ENCODE measurements at regions of chr11 and their contacts with region 1.

Region 1: DNA sequence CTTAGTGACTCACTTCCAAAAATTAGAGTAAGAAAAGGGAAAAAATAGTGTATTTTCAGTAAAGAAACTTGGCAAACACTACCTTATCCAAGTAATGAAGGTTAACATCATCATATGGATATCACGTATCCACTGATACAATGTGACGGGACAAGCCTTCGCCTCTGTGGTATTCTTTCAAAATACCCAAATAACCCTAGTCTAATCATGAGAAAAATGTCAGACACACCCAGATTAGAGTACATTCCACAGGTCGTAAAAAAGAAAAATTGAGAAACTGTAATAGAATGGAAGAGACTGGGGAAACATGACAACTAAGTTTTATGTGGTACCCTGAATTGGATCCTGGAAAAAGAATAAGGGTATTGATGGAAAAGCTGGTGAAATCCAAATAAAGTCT is 49.0 kb downstream of the NARS2 start:
- DNase-seq: no peak

Region 2: DNA sequence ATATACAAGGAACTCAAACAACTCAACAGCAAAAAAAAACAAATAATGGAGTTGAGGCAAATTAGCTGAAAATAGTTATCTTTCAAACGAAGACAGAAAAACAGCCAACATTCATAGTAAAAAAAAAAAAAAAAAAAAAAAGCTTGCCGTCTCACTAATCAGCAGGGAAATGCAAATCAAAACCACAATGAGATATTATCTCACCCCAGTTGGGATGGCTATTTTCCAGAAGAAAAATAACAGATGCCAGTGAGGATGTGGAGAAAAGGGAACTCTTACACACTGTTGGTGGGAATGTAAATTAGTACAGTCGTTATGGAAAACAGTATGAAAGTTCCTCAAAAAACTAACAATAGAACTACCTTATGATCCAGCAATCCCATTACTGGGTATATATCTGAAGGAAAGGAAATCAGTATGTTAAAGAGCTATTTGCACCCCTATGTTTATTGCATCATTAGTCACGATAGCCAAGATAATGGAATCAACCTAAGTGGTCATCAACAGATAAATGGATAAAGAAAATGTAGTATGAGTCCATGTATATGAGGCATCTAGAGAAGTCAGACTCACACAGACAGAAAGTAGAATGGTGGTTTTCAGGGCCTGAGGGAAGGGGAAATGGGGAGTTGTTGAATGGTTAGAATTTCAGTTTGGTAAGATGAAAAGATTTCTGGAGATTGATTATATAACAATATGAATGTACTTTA is 281.0 kb before region 1 on chr11:
- intact Hi-C with region 1: no loop called
- DNase-seq: no peak

Region 3: GRCh38 chr11:78453140-78453935 is 72.4 kb before region 1 on chr11:
- intact Hi-C with region 1: no loop called
- DNase-seq: no peak

Region 4: GRCh38 chr11:78504708-78505107 is 21.0 kb before region 1 on chr11:
- intact Hi-C with region 1: no loop called
- DNase-seq: no peak

Region 5: DNA sequence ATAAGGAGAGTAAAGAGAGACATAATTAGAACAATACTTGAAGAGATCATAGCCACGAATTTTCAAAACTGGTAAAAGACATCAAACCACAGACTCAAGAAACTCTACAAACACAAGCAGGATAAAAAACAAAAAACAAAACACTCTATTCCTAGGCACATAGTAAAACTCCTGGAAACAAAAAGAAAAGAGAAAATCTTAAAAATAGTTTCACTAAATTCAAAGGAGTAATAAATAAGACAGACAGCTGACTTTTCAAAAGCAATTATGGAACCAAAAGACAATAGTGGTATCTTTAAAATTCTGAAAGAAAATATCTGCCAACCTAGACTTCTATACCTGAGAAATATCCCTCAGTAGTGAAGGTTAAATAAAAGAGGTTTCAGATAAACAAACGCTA is 58.2 kb after region 1 on chr11:
- intact Hi-C with region 1: loop called in 1 of 2 experiments (anchors 2 kb)
- DNase-seq: no peak

Region 6: DNA sequence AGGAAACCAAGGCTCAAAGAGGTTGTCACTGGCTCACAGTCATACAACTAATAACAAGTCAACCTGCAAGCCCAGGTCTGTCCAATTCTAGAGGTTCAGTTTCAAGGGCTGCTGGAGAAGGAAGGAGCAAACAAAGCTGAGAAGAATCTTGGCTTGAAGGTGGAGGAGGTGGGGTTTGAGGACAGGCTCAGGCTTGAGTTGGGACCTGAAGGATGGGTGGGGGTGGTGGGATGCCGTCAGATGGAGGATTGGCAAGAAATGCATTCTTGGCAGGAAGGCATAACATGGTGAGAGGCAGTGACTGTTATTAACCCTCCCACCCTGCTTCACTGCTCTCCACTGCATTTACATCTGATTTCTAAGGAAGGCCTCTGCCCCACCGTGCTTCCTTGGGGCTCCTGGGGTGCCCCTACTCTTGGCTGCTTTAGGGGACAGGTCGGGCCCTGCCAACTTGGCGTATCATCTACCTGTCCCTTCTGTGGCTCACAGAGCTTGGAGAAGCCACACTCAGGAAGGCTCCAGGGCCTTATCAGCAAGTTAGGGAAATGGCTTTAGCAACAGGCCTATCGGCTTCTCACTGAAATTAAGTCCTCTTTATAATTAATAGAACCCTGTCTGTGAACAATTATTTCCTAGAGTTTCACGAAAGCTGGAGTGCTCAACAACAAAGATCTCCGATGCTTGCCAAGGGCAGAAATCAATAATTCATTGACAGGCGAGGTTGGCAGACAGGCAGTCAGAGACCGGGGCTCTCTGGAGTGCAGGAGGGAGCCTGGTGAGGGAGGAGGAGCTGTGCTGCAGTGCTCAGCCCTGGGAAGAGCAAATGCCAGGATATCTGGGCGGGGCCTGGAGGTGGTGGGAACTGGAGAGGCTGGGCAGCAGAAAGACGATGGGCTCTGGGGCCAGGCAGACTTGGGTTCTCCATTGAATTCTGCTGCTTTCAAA is 133.9 kb after region 1 on chr11:
- intact Hi-C with region 1: no loop called
- DNase-seq: peak; percentile 73

Measured in posterior vena cava (tissue), 2 donors.